ENCODE measurements at regions of chr1 and their contacts with region 1.

Region 1: DNA sequence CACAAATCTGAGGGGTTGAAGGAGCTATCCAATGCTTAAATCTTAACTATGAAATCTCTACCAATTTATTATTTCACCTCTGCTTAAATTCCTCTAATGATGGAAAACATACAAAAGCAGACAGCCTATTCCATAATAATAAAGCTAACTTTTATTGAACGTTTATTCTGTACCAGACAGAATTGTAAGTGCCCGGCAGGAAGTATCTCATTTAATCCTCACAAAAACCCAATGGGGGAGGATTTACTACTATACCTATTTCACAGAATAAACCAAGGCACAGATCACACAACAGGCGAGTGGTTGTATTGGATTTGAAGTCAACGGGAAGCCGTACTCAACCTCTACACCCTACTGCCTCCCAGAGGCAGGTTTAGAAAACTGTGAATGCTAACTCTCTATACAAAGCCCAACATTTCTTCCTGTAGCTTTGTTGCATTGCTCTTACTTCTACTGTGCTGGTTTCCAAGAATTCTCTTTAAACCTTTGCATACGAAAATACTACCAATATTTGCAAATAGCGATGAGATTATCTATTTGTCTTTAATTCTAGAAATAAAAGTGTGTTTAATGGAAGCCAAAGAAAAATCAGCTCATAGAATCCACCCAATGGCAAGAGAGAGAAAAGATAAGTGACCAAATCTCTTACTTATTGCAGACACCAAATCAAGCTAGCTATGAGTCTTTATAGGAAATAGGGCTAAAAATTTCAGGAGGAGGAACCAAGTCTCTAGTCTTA is 33.5 kb upstream of the C1orf53 start:
- DNase-seq: no peak
- ATAC-seq: peak; percentile 82
- H3K4me3 Mint-ChIP-seq: no peak overlapping the region
- H3K27ac Mint-ChIP-seq: no peak overlapping the region
- H3K4me1 Mint-ChIP-seq: no peaks in the 10 kb centered on the region
- H3K27me3 Mint-ChIP-seq: no peaks in the 10 kb centered on the region
- CTCF ChIP-seq: no peak

Region 2: DNA sequence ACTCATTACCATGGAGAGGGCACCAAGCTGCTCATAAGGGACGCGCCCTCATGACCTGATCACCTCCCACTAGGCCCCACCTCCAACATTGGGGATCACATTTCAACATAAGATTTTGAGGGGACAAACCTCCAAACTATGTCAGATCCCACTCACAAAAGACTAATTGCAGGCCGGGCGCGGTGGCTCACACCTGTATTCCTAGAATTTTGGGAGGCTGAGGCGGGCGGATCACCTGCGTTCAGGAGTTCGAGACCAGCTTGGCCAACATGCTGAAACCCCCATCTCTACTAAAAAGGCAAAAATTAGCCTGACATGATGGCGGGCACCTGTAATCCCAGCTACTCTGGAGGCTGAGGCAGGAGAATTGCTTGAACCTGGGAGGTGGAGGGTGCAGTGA is 372.2 kb before region 1 on chr1:
- CTCF ChIA-PET with region 1: no interaction called
- POLR2A ChIA-PET with region 1: no interaction called
- intact Hi-C with region 1: no loop called
- DNase-seq: no peak
- ATAC-seq: no peak
- H3K4me3 Mint-ChIP-seq: no peak overlapping the region
- H3K27ac Mint-ChIP-seq: no peak overlapping the region
- H3K4me1 Mint-ChIP-seq: no peaks in the 10 kb centered on the region
- H3K27me3 Mint-ChIP-seq: no peaks in the 10 kb centered on the region
- CTCF ChIP-seq: no peak

Region 3: DNA sequence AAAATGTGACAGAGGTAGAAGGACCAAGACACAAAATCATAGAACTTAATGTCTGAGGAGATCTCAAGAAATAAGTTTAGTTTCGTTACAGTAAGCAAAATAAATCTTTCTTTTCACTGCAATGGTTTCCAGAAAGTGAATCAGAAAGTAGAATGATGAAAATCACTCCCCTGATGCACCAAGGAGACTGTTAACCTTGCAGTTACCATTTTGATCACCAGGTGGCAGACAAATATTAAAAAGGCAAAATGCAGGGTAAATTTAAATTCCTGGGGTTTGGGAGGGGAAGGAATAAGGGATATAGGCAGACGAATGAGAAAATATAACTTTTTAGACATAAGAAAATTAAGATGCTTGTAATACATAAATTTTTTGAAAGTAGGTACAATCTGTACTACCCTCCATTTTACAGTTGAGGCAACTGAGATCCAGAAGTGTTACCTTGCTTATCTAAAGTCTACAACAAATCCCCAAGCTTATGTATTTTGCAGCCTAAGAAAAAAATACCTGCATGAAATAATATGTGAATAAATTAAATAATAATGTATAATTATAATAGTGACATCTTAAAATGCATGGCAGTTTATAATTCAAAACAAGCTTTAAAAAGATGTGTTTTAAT is 347.7 kb before region 1 on chr1:
- CTCF ChIA-PET with region 1: interaction called, 21 read pairs
- POLR2A ChIA-PET with region 1: no interaction called
- intact Hi-C with region 1: loop called (anchors 1 kb)
- DNase-seq: no peak
- ATAC-seq: peak; percentile 42
- H3K4me3 Mint-ChIP-seq: no peak overlapping the region
- H3K27ac Mint-ChIP-seq: no peak overlapping the region
- H3K4me1 Mint-ChIP-seq: no peaks in the 10 kb centered on the region
- H3K27me3 Mint-ChIP-seq: no peaks in the 10 kb centered on the region
- CTCF ChIP-seq: peak; percentile 47

Region 4: GRCh38 chr1:197526736-197527371 is 342.1 kb before region 1 on chr1:
- CTCF ChIA-PET with region 1: interaction called, 21 read pairs
- POLR2A ChIA-PET with region 1: no interaction called
- intact Hi-C with region 1: loop called (anchors 1 kb)
- DNase-seq: no peak
- ATAC-seq: no peak
- H3K4me3 Mint-ChIP-seq: no peak overlapping the region
- H3K27ac Mint-ChIP-seq: no peak overlapping the region
- H3K4me1 Mint-ChIP-seq: no peaks in the 10 kb centered on the region
- H3K27me3 Mint-ChIP-seq: no peaks in the 10 kb centered on the region
- CTCF ChIP-seq: peak; percentile 45

Region 5: GRCh38 chr1:197614916-197615692 is 253.8 kb before region 1 on chr1:
- CTCF ChIA-PET with region 1: interaction called, 153 read pairs
- POLR2A ChIA-PET with region 1: interaction called, 4 read pairs
- intact Hi-C with region 1: loop called (anchors 1 kb)
- DNase-seq: no peak
- ATAC-seq: no peak
- H3K4me3 Mint-ChIP-seq: no peak overlapping the region
- H3K27ac Mint-ChIP-seq: no peak overlapping the region
- H3K4me1 Mint-ChIP-seq: no peaks in the 10 kb centered on the region
- H3K27me3 Mint-ChIP-seq: no peaks in the 10 kb centered on the region
- CTCF ChIP-seq: no peak

Region 6: GRCh38 chr1:197692965-197693364 is 176.0 kb before region 1 on chr1:
- CTCF ChIA-PET with region 1: interaction called, 29 read pairs
- POLR2A ChIA-PET with region 1: no interaction called
- intact Hi-C with region 1: loop called (anchors 1 kb)
- DNase-seq: no peak
- ATAC-seq: no peak
- H3K4me3 Mint-ChIP-seq: no peak overlapping the region
- H3K27ac Mint-ChIP-seq: no peak overlapping the region
- H3K4me1 Mint-ChIP-seq: peaks cover 36% of the 10 kb centered on the region
- H3K27me3 Mint-ChIP-seq: no peaks in the 10 kb centered on the region
- CTCF ChIP-seq: no peak

Region 7: DNA sequence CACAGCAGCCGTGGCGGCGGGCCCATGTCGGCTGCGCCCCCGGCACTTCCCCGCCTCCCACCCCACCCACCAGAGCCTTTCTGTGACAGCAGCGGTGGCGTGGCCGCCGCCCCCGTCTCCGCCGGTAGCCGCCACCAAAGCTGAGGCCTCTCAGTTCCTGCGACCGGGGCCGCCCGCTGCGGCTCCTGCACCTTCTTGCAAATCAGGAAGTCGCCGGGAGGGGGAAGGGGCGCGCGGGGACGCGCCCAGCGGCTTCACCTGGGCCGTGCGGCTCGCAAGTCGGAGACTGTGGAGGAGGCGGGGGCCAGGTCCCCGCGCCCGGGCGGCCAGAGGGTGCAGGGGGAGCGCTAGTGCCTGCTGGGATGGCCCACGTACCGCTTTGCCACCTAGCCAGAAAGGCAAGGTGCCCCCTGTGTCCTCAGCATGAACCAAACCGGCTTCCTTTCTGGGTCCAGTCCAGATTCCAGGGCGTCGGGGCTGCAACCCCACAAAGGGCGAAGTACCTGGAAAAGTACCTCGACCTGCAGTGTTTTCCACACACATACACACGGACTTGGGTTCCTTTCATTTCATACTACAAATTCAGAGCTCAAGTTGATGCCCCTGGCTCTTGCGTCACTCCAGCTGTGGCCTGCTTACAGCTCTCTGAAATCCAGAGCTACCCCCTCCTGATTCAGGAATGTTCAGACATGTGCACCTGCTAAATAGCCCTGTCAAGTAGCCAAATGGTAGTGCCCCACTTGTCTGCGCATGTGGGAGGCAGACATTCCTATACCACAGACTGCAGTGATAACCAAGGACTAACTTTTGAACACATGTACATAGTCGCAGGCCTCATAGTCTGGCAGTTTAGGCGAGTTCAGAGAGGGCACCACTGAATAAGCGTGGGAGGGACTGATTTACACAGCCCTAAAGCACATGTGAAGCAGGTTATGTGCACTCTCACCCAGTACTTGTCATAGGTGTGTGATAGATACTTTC is 93.3 kb before region 1 on chr1 and contains the start of gene DENND1B:
- CTCF ChIA-PET with region 1: interaction called, 3 read pairs
- POLR2A ChIA-PET with region 1: interaction called, 3 read pairs
- intact Hi-C with region 1: loop called (anchors 2 kb)
- DNase-seq: peak; percentile 81
- ATAC-seq: peak; percentile 72
- H3K4me3 Mint-ChIP-seq: peak within 1 kb of the TSS; percentile 87
- H3K27ac Mint-ChIP-seq: peak within 1 kb of the TSS; percentile 96
- H3K4me1 Mint-ChIP-seq: peaks cover 69% of the 10 kb centered on the region
- H3K27me3 Mint-ChIP-seq: no peaks in the 10 kb centered on the region
- CTCF ChIP-seq: no peak
- total RNA-seq, gene DENND1B: 15.5 and 19.2 TPM in 2 replicates

Region 8: DNA sequence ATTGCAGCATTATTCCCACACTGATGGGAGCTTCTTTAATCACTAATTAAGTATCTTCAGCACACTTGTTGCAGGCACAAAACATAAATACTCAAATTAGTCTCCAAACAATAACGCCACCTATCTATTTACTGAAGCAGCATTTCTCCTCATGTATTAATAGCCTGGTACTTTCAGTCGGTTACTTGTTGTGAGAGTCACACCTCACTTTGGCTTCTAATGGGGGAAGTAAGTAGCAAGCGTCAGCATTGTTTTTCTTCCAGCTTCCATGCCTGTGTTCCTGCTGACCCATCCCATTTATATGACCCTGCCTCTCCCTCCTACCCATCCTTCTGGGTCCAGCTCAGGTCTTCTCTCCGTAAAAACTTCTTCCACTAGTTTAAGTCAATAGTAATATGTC is 61.7 kb before region 1 on chr1:
- CTCF ChIA-PET with region 1: no interaction called
- POLR2A ChIA-PET with region 1: no interaction called
- intact Hi-C with region 1: no loop called
- DNase-seq: no peak
- ATAC-seq: no peak
- H3K4me3 Mint-ChIP-seq: no peak overlapping the region
- H3K27ac Mint-ChIP-seq: no peak overlapping the region
- H3K4me1 Mint-ChIP-seq: peaks cover 5% of the 10 kb centered on the region
- H3K27me3 Mint-ChIP-seq: peaks cover 3% of the 10 kb centered on the region
- CTCF ChIP-seq: no peak

Region 9: GRCh38 chr1:198318085-198318484 is 449.2 kb after region 1 on chr1:
- CTCF ChIA-PET with region 1: no interaction called
- POLR2A ChIA-PET with region 1: no interaction called
- intact Hi-C with region 1: no loop called
- DNase-seq: no peak
- ATAC-seq: no peak
- H3K4me3 Mint-ChIP-seq: no peak overlapping the region
- H3K27ac Mint-ChIP-seq: no peak overlapping the region
- H3K4me1 Mint-ChIP-seq: no peaks in the 10 kb centered on the region
- H3K27me3 Mint-ChIP-seq: no peaks in the 10 kb centered on the region
- CTCF ChIP-seq: no peak

Region 10: GRCh38 chr1:198465201-198466144 is 596.6 kb after region 1 on chr1:
- CTCF ChIA-PET with region 1: interaction called, 4 read pairs
- POLR2A ChIA-PET with region 1: no interaction called
- intact Hi-C with region 1: loop called (anchors 5 kb)
- DNase-seq: no peak
- ATAC-seq: peak; percentile 49
- H3K4me3 Mint-ChIP-seq: no peak overlapping the region
- H3K27ac Mint-ChIP-seq: no peak overlapping the region
- H3K4me1 Mint-ChIP-seq: no peaks in the 10 kb centered on the region
- H3K27me3 Mint-ChIP-seq: no peaks in the 10 kb centered on the region
- CTCF ChIP-seq: no peak

Measured in activated B cell treated with CpG ODN at 0.5 μM for 24 hours (primary cell).